Tibial artery (tissue), 4 donors: ENCODE measurements at regions of chr1 and their contacts with region 1.

Region 1: GRCh38 chr1:117929173-117929989 is at the starts of genes GDAP2 and WDR3:
- DNase-seq: peak; percentile 97
- H3K4me3 ChIP-seq: peak within 1 kb of the TSS; percentile 98
- H3K27ac ChIP-seq: peak within 1 kb of the TSS; percentile 89 to 96
- H3K4me1 ChIP-seq: peaks cover 0 to 34% (median 32%) of the 10 kb centered on the region in 4 donors
- H3K27me3 ChIP-seq: no peaks in the 10 kb centered on the region
- CTCF ChIP-seq: no peak

Region 2: GRCh38 chr1:117367047-117368018 is 562.0 kb before region 1 on chr1 and contains the start of gene MAN1A2:
- intact Hi-C with region 1: loop called (anchors 10 kb)
- DNase-seq: peak; percentile 87 to 94
- H3K4me3 ChIP-seq: peak within 1 kb of the TSS; percentile 71 to 93
- H3K27ac ChIP-seq: peak within 1 kb of the TSS; percentile 86 to 98
- H3K4me1 ChIP-seq: peaks cover 0 to 59% (median 22%) of the 10 kb centered on the region in 4 donors
- H3K27me3 ChIP-seq: no peaks in the 10 kb centered on the region
- CTCF ChIP-seq: peak in 1 of 2 experiments; percentile 17